ENCODE measurements at regions of chr1 and their contacts with region 1.

Region 1: DNA sequence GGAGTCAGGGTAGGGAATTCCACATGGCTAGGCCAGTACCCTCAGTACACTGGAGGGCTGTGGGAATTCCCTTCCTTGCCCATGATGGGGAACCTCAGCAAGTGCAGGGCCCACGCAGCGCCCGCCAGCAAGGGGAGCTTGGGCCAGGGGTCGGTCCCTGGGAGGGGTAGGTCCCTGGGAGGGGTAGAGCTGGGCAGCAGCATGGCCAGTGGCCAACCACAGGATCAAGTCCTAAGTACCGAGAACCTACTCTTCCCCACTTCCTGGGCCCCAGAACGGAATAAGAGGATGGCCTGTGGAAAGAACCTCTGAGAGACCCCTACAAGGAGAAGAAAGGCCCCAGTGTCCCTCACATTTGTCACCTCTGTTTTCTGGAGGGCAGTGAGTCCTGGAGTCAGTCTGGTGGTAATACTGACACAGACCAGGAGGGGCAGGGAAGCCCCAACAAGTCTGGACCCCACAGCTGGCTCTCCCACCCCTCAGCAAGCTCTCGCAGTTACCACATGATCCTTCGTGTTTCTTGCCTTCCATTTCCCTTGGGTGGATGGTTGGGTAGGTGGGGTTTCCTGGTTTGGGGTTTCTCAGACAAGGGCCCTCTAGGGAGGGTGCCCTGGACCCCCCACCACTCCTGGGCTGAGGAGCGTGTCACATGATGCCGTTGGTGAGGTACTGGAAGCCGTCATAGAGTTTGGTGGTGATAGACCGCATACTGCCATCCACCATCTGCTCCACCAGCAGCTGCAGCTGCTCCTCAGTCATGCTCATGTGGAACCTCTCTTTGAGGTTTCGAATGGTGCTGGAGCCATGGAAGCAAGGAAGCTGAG is 10.3 kb downstream of the ZNF687 start:
- DNase-seq: no peak
- H3K4me3 ChIP-seq: no peak overlapping the region
- CTCF ChIP-seq: no peak

Region 2: DNA sequence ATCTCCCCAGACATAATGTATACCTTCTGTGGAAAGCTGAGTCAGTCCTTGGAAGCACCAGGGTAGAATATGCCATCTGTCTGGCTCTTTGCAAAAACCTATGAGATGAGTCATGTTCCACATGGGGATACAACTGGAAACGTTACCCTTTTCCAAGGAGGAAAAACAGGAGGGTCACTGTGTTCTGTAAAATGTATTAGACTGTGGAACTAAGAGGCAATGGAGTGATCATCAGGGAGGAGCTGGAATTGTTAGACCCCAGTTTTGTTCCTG is 54.0 kb before region 1 on chr1:
- CTCF ChIA-PET with region 1: no interaction called
- POLR2A ChIA-PET with region 1: no interaction called
- DNase-seq: peak; percentile 63
- H3K4me3 ChIP-seq: no peak overlapping the region
- CTCF ChIP-seq: no peak

Region 3: DNA sequence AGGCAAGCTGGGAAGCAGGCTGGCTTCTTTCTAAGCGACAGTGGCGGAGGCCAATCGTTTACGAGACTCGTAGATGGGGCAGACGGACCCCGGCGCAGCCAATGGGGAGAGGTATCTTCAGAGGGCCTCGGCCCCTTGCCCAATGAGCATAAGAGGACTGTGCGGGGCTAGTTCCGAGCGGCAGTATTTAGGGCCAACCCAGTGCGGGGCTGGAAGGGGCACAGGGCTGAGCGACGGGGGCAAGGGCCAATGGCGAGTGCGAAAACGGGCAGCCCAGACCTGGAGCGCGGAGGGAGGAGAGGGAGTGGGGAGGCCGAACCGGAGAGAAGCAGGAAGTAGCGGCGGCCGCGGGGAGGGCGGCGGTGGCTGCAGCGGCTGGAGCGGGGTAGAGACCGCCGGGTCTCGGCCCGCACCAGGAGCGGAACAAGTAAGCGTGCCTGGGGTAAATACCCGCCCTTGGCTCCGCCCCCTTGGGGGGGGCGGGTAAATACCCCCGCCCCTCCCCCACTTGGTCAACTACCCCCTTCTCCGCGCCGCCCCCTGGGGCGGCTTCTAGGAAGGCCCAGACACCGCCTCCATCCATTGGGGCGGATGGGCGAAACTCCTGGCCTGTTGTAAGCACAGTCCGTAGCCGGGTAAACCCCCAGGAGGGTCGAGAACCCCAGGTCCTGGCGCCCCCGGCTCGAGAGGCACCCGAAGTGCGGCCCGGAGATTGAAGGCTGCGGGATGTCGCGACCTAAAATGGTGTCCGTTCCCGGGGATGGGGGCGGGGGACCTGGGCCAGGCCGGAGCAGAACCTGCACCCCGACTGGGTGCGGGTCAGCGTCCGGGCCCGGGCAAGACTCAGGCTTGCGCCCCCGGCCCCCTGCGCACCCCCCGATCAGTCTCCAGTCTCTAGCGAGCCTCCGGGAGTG is 10.2 kb before region 1 on chr1 and contains the start of gene ZNF687:
- CTCF ChIA-PET with region 1: interaction called, 9 read pairs
- POLR2A ChIA-PET with region 1: interaction called, 24 read pairs
- DNase-seq: peak; percentile 100
- H3K4me3 ChIP-seq: peak within 1 kb of the TSS; percentile 97
- CTCF ChIP-seq: no peak

Region 4: DNA sequence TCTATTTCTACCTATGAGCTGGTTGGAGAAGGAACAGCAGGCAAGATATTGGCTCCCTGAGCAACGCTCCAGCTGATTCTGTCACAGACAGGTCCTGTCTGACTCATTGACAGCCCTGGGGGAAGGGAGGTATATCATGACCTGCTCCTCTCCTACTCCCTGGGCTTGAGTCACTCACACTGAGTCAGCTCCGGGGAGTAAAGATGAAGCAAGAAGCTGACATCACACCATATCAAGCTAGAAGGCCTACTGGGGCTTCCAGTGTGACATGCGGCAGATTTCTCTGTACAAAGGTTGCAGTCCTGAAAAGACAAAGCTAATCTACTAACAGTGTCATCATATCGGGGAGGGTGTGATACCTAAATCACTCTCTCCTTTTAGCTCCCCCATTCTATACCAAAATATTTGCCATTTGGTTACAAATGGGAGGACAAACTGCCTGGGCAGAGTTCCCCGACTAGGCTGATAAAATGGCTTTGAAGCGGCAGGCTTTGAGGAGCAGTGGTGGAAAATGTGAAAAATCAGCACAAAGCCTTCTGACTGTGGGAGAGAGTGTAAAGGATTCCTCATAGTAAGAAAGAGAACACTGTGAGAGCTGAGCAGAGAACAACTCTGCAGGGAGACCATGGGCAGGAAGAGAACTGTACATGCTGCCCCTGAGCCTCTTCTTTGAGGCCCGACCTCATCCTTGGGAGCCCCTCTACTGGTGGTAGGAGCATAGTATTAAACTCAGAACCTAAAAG is 19.3 kb after region 1 on chr1:
- CTCF ChIA-PET with region 1: interaction called, 30 read pairs
- POLR2A ChIA-PET with region 1: interaction called, 3 read pairs
- DNase-seq: peak; percentile 95
- H3K4me3 ChIP-seq: no peak overlapping the region
- CTCF ChIP-seq: no peak

Measured in AG04449 (cell line).